Sigmoid colon (tissue), 7 donors: ENCODE measurements at regions of chr13 and their contacts with region 1.

Region 1: DNA sequence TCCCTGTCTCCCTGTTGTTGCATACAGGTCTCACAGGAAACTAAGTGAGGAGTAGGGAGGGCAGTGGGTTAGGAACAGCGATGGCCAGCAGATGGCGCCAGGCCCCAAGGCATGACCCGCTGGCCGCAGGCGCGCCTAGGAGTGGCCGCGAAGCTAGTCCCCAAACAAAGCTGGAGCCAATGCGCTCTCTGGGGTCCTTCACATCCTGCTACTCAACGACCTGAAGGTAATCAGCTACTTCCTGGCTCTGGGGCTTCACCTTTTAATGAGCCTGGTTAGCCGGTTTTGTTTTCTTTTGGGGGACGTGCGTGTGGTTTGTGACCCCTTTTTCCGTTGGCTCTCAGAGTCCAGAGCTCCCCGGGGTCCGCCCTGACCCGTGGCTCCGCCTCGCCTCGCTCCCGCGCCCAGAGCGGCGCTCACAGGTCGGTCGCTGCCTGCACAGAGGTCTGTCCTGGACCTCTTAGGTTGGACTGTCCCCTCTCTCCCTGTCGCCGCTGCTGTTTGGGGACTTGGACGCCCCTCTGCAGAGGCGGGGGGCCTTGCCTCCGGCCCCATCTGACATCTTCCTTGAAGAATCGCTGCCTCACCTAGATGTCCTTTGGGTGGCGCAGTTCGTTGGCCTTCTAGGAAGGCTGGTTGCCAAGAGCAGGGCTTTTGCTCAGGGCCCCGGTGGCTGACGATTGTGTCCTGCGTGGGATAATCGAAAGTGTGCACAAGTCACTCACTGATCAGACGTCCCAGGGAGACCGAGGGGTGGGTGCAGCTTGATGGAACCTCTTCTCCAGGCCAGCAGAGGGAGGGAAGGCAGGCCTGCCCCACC is 62.1 kb upstream of the GTF3A start:
- DNase-seq: peak; percentile 91
- H3K4me3 ChIP-seq: peak overlapping the region; percentile 18 to 54 (median 46)
- H3K27ac ChIP-seq: peak overlapping the region in 1 of 4 donors; percentile 37
- H3K4me1 ChIP-seq: peaks cover 0 to 17% (median 12%) of the 10 kb centered on the region in 4 donors
- H3K27me3 ChIP-seq: peaks cover 0 to 7% (median 0%) of the 10 kb centered on the region in 3 donors
- CTCF ChIP-seq: peak; percentile 75 to 91 (median 84)
- EP300 ChIP-seq: no peak
- POLR2A ChIP-seq: no peak

Region 2: DNA sequence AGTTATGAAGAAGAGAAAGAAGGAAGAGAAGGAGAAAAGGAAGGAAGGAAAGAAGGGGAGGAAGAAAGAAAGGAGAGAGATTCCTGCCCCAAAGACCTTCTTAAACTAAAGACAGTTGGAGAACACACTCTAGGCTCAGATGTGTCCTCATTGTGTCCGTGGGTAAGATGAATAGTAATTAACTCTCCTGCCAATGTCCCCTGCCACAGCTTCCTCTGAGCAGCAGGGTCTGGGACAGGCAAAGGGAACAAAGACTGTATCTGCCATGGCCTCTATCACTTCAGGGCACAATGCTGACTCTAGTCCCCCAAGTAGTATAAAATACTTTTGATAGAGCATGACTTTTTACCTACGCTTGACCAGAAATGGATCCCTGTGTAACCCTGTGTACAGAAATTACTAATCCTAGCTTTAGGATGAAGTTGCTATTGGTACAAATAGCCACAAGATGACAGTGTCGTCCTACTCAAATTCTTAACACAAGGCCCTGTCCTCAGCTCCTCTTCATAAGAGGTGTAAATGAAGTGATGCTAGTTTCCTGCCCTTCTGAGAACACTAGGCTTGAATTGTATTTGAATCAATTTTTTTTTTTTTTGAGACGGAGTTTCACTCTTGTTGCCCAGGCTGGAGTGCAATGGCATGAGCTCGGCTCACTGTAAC is 415.5 kb before region 1 on chr13:
- intact Hi-C with region 1: loop called (anchors 1 kb)
- DNase-seq: no peak
- H3K4me3 ChIP-seq: no peak overlapping the region
- H3K27ac ChIP-seq: no peak overlapping the region
- H3K4me1 ChIP-seq: peaks cover 0 to under 1% (median 0%) of the 10 kb centered on the region in 4 donors
- H3K27me3 ChIP-seq: peaks cover 0 to 7% (median 0%) of the 10 kb centered on the region in 3 donors
- CTCF ChIP-seq: peak; percentile 86 to 91 (median 90)
- EP300 ChIP-seq: no peak
- POLR2A ChIP-seq: no peak

Region 3: GRCh38 chr13:27182844-27183497 is 179.3 kb before region 1 on chr13:
- intact Hi-C with region 1: no loop called
- DNase-seq: peak; percentile 71
- H3K4me3 ChIP-seq: no peak overlapping the region
- H3K27ac ChIP-seq: no peak overlapping the region
- H3K4me1 ChIP-seq: peaks cover 0 to 10% (median 3%) of the 10 kb centered on the region in 4 donors
- H3K27me3 ChIP-seq: no peaks in the 10 kb centered on the region
- CTCF ChIP-seq: no peak
- EP300 ChIP-seq: no peak
- POLR2A ChIP-seq: no peak

Region 4: GRCh38 chr13:27401210-27401609 is 38.9 kb after region 1 on chr13:
- intact Hi-C with region 1: no loop called
- DNase-seq: no peak
- H3K4me3 ChIP-seq: no peak overlapping the region
- H3K27ac ChIP-seq: no peak overlapping the region
- H3K4me1 ChIP-seq: peaks cover 0 to 21% (median 16%) of the 10 kb centered on the region in 4 donors
- H3K27me3 ChIP-seq: no peaks in the 10 kb centered on the region
- CTCF ChIP-seq: no peak
- EP300 ChIP-seq: no peak
- POLR2A ChIP-seq: no peak

Region 5: GRCh38 chr13:27450921-27451471 is 88.7 kb after region 1 on chr13:
- intact Hi-C with region 1: no loop called
- DNase-seq: peak; percentile 73
- H3K4me3 ChIP-seq: peak overlapping the region; percentile 68 to 98 (median 90)
- H3K27ac ChIP-seq: peak overlapping the region; percentile 95 to 100 (median 98)
- H3K4me1 ChIP-seq: peaks cover 0 to 53% (median 32%) of the 10 kb centered on the region in 4 donors
- H3K27me3 ChIP-seq: no peaks in the 10 kb centered on the region
- CTCF ChIP-seq: no peak
- EP300 ChIP-seq: peak in 1 of 4 donors; percentile 40
- POLR2A ChIP-seq: no peak

Region 6: DNA sequence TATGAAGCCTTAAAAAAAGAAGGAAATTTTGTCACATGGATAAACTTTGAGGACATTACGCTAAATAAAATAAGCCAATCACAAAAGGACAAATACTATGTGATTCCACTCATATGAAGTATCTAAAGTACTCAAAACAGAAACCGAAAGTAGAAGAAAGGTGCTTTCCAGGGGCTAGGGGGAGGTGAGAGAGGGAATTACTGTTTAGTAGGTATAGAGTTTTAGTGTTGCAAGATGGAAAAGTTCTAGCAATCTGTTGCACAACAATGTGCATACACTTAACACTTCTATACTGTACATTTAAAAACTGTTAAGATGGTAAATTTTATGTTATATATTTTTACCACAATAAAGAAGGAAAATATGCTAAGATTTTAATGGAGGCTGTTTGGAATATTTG is 342.4 kb after region 1 on chr13:
- intact Hi-C with region 1: no loop called
- DNase-seq: no peak
- H3K4me3 ChIP-seq: no peak overlapping the region
- H3K27ac ChIP-seq: no peak overlapping the region
- H3K4me1 ChIP-seq: no peaks in the 10 kb centered on the region
- H3K27me3 ChIP-seq: no peaks in the 10 kb centered on the region
- CTCF ChIP-seq: no peak
- EP300 ChIP-seq: no peak
- POLR2A ChIP-seq: no peak